Activated CD4-positive, alpha-beta T cell treated with anti-CD3 and anti-CD28 coated beads for 36 hours (primary cell): ENCODE measurements at regions of chr6 and their contacts with region 1.

Region 1: DNA sequence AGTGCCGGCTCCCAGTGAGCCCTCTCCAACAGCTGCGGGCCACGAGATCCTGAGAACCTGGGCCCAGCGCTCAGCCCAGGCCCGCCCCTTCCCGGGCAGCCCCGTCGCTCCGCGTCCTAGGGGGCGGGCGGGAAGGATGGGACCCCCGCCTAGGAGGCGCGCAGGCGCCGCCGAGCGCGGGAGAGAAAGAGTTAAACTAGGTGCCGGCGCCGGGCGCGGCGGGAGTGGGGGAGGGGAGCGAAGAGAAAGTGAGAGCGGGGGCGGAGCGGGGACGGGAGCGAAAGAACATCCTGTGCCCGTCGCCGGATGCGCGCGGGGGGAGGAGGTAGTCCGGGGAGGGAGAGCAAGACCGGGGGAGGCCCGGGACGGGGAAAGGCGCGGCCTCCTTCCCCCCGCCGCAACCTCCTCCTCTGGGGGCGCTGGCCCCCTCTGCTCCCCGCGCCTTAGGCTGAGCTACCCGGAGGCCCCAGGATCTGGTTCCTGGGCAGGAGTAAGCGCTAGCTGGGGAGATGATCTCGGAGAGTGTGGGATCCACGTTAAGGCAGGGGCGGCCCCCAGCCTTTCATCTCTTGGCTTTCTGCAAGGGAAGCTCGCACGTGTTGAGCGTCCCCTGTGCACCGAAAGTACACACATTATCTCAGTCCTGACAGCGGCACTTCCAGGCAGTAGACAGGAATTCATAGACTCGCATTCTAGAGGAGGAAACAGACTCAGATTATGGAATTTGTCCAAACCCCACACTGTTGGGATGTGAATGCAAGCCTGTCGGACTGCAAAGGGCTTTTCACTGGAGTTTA is 4.9 kb upstream of the ARMC12 start:
- DNase-seq: peak; percentile 99
- ATAC-seq: peak; percentile 57
- H3K4me3 Mint-ChIP-seq: peak overlapping the region; percentile 77
- H3K27ac Mint-ChIP-seq: peak overlapping the region; percentile 95
- H3K4me1 Mint-ChIP-seq: peaks cover 84% of the 10 kb centered on the region
- H3K27me3 Mint-ChIP-seq: no peaks in the 10 kb centered on the region

Region 2: DNA sequence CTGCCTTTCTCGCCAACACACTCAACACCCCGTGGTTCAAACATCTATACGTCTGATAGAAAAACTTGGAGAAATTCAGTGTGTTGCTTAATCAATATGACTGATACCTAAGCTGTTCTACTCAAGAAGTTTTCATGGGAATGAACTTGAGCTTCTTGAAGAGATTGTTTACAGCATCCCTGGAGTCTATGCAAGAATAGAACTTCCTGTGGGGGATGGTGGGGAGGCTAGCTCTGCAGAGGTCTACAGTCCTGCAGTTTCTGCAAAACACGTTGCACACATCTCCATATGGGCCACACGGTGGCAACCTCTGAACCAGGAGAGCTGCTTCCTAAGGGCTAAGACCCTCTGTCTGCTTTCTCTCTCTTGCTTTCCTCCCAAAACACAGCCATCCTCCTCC is 312.5 kb before region 1 on chr6:
- CTCF ChIA-PET with region 1: no interaction called
- POLR2A ChIA-PET with region 1: no interaction called
- intact Hi-C with region 1: no loop called
- DNase-seq: no peak
- ATAC-seq: peak; percentile 42
- H3K4me3 Mint-ChIP-seq: no peak overlapping the region
- H3K27ac Mint-ChIP-seq: peak overlapping the region; percentile 34
- H3K4me1 Mint-ChIP-seq: peaks cover 28% of the 10 kb centered on the region
- H3K27me3 Mint-ChIP-seq: no peaks in the 10 kb centered on the region

Region 3: GRCh38 chr6:35522660-35523658 is 209.0 kb before region 1 on chr6:
- CTCF ChIA-PET with region 1: interaction called, 46 read pairs
- POLR2A ChIA-PET with region 1: no interaction called
- intact Hi-C with region 1: loop called (anchors 1 kb)
- DNase-seq: peak; percentile 90
- ATAC-seq: peak; percentile 91
- H3K4me3 Mint-ChIP-seq: peak overlapping the region; percentile 57
- H3K27ac Mint-ChIP-seq: peak overlapping the region; percentile 81
- H3K4me1 Mint-ChIP-seq: peaks cover 5% of the 10 kb centered on the region
- H3K27me3 Mint-ChIP-seq: no peaks in the 10 kb centered on the region

Region 4: DNA sequence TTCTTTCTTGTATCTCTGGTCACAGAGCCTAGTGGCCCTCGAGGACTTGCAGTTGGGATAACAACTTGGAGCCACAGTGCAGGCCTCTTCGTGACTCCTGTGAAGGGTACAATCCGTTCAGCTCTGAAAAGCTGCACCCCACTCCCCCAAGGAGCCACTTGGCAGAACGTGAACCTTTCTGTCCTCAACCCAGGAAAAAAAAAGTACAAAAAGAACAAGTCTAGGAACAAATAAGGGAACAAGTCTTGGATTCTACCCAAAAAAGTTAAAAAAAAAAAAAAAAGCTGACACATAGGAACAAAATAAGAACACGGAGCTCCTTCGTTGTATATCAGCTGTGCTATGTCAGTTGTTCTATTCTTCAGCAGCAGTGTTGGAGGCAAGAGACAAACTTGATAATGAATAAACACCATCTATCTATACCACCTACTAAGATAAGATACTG is 141.3 kb before region 1 on chr6:
- CTCF ChIA-PET with region 1: interaction called, 178 read pairs
- POLR2A ChIA-PET with region 1: no interaction called
- intact Hi-C with region 1: no loop called
- DNase-seq: no peak
- ATAC-seq: no peak
- H3K4me3 Mint-ChIP-seq: no peak overlapping the region
- H3K27ac Mint-ChIP-seq: peak overlapping the region; percentile 47
- H3K4me1 Mint-ChIP-seq: peaks cover 88% of the 10 kb centered on the region
- H3K27me3 Mint-ChIP-seq: no peaks in the 10 kb centered on the region

Region 5: GRCh38 chr6:35642471-35643161 is 89.3 kb before region 1 on chr6:
- CTCF ChIA-PET with region 1: interaction called, 47 read pairs
- POLR2A ChIA-PET with region 1: interaction called, 3 read pairs
- intact Hi-C with region 1: no loop called
- DNase-seq: no peak
- ATAC-seq: peak; percentile 47
- H3K4me3 Mint-ChIP-seq: no peak overlapping the region
- H3K27ac Mint-ChIP-seq: peak overlapping the region; percentile 21
- H3K4me1 Mint-ChIP-seq: peaks cover 67% of the 10 kb centered on the region
- H3K27me3 Mint-ChIP-seq: no peaks in the 10 kb centered on the region

Region 6: GRCh38 chr6:35678021-35678654 is 53.8 kb before region 1 on chr6:
- CTCF ChIA-PET with region 1: interaction called, 21 read pairs
- POLR2A ChIA-PET with region 1: interaction called, 4 read pairs
- intact Hi-C with region 1: loop called (anchors 1 to 2 kb)
- DNase-seq: no peak
- ATAC-seq: no peak
- H3K4me3 Mint-ChIP-seq: peak overlapping the region; percentile 9
- H3K27ac Mint-ChIP-seq: peak overlapping the region; percentile 78
- H3K4me1 Mint-ChIP-seq: peaks cover 83% of the 10 kb centered on the region
- H3K27me3 Mint-ChIP-seq: no peaks in the 10 kb centered on the region

Region 7: GRCh38 chr6:35782439-35782838 is 50.5 kb after region 1 on chr6:
- CTCF ChIA-PET with region 1: no interaction called
- POLR2A ChIA-PET with region 1: no interaction called
- intact Hi-C with region 1: no loop called
- DNase-seq: no peak
- ATAC-seq: no peak
- H3K4me3 Mint-ChIP-seq: no peak overlapping the region
- H3K27ac Mint-ChIP-seq: no peak overlapping the region
- H3K4me1 Mint-ChIP-seq: peaks cover 2% of the 10 kb centered on the region
- H3K27me3 Mint-ChIP-seq: peaks cover 24% of the 10 kb centered on the region

Region 8: GRCh38 chr6:36123257-36124139 is 391.6 kb after region 1 on chr6:
- CTCF ChIA-PET with region 1: no interaction called
- POLR2A ChIA-PET with region 1: interaction called, 3 read pairs
- intact Hi-C with region 1: loop called in 1 of 2 experiments (anchors 5 kb)
- DNase-seq: peak; percentile 95
- ATAC-seq: peak; percentile 77
- H3K4me3 Mint-ChIP-seq: peak overlapping the region; percentile 27
- H3K27ac Mint-ChIP-seq: peak overlapping the region; percentile 64
- H3K4me1 Mint-ChIP-seq: peaks cover 89% of the 10 kb centered on the region
- H3K27me3 Mint-ChIP-seq: no peaks in the 10 kb centered on the region

Region 9: DNA sequence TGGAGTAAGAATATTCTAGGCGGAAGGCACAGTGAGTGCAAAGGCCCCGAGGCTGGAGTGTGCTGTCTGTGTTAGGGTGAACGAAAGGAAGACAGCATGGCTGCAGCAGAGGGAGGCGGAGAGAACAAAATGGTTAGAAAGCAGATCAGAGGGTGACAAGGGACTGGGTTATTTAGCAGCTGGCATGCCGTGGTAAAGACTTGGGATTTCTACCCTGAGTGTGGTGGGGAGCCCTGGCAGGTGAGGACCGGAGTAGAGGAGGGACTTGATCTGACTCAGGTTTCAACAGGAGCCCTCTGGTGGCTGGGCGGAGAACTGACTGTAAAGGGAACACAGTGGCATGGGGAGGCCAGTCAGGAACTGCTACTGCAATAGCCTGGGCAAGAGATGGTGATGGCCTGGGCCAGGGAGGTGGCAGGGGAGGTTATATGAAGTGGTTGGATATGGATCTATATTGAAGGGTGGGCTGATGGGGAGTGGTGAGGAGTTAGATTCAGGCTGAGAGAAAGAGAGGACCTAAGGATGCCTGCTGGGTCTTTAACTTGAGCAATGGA is 1476.0 kb after region 1 on chr6:
- CTCF ChIA-PET with region 1: no interaction called
- POLR2A ChIA-PET with region 1: no interaction called
- intact Hi-C with region 1: no loop called
- DNase-seq: peak; percentile 95
- ATAC-seq: peak; percentile 73
- H3K4me3 Mint-ChIP-seq: no peak overlapping the region
- H3K27ac Mint-ChIP-seq: peak overlapping the region; percentile 53
- H3K4me1 Mint-ChIP-seq: peaks cover 67% of the 10 kb centered on the region
- H3K27me3 Mint-ChIP-seq: no peaks in the 10 kb centered on the region